ENCODE measurements at regions of chr1 and their contacts with region 1.

Region 1: GRCh38 chr1:184805667-184806295 is 51.1 kb upstream of the EDEM3 start:
- DNase-seq: peak; percentile 83 to 89
- H3K4me3 ChIP-seq: no peak overlapping the region
- H3K4me3 Mint-ChIP-seq: no peak overlapping the region
- H3K27ac Mint-ChIP-seq: no peak overlapping the region
- H3K4me1 ChIP-seq: no peaks in the 10 kb centered on the region
- H3K4me1 Mint-ChIP-seq: peaks cover 9% of the 10 kb centered on the region
- H3K27me3 ChIP-seq: no peaks in the 10 kb centered on the region
- H3K27me3 Mint-ChIP-seq: no peaks in the 10 kb centered on the region
- CTCF ChIP-seq: peak; percentile 88 to 94

Region 2: GRCh38 chr1:182861994-182862393 is 1943.8 kb before region 1 on chr1:
- CTCF ChIA-PET with region 1: no interaction called
- POLR2A ChIA-PET with region 1: interaction called, 10 read pairs
- intact Hi-C with region 1: no loop called
- DNase-seq: no peak
- H3K4me3 ChIP-seq: no peak overlapping the region
- H3K4me3 Mint-ChIP-seq: no peak overlapping the region
- H3K27ac Mint-ChIP-seq: no peak overlapping the region
- H3K4me1 ChIP-seq: no peaks in the 10 kb centered on the region
- H3K4me1 Mint-ChIP-seq: no peaks in the 10 kb centered on the region
- H3K27me3 ChIP-seq: no peaks in the 10 kb centered on the region
- H3K27me3 Mint-ChIP-seq: no peaks in the 10 kb centered on the region
- CTCF ChIP-seq: no peak

Region 3: DNA sequence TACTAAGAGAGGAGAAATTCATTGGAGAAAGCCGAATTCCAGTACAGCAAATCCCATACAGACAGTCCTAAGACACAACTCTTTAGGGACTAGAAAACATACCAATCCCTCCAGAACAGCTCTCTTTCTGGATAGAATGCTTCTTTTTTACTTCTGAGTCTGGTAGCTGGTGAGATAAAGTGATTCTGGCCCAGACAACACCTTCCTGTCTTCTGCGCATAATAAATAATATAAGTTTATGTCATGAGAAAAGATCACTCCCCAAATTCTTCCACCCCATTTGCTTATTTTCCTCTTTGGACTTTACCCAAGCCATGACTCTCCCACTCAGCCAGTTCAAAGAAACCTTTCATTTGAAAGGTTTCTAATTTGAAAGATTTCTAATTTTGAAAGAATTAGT is 149.6 kb before region 1 on chr1:
- CTCF ChIA-PET with region 1: no interaction called
- POLR2A ChIA-PET with region 1: no interaction called
- intact Hi-C with region 1: no loop called
- DNase-seq: no peak
- H3K4me3 ChIP-seq: no peak overlapping the region
- H3K4me3 Mint-ChIP-seq: no peak overlapping the region
- H3K27ac Mint-ChIP-seq: no peak overlapping the region
- H3K4me1 ChIP-seq: no peaks in the 10 kb centered on the region
- H3K4me1 Mint-ChIP-seq: no peaks in the 10 kb centered on the region
- H3K27me3 ChIP-seq: no peaks in the 10 kb centered on the region
- H3K27me3 Mint-ChIP-seq: peaks cover 3% of the 10 kb centered on the region
- CTCF ChIP-seq: no peak

Region 4: DNA sequence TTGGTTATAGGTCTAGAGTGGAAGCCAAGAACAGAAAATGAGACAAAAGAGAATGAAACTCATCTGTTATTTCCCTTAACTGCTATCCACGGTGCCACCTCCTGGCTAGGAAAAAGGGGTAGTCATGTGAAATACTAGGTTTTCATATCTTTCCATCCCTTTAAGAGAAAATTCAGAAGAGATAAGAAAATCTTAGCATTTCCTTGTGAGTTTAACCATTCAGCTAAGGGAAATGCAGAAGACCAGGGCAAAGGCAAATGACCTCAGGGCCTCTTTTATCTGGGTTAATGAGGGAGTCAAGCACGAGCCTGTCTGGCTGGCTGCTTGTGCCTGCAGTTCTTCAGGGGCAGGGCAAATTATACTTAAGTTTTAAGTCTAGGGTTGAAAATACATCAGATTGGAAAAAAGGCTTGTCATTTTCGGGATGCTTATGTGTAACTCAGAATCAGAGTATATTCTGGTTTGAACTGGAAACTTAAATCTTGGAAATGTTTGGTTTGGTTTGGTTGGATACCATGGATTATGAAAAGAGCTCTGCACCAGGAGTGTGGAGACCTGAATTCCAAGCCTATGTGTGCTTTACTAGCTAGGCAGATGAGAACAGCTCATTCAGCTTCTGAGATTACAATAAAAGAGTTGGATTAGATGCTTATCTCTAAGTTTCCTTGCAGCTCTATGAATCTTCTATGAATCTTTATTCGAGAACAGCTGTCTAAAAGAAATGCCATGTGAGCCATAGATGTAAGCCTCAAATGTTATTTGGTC is 148.6 kb after region 1 on chr1:
- CTCF ChIA-PET with region 1: interaction called, 7 read pairs
- POLR2A ChIA-PET with region 1: no interaction called
- intact Hi-C with region 1: loop called (anchors 1 kb)
- DNase-seq: peak; percentile 9 to 40
- H3K4me3 ChIP-seq: no peak overlapping the region
- H3K4me3 Mint-ChIP-seq: no peak overlapping the region
- H3K27ac Mint-ChIP-seq: no peak overlapping the region
- H3K4me1 ChIP-seq: peaks cover 16% of the 10 kb centered on the region
- H3K4me1 Mint-ChIP-seq: peaks cover 18% of the 10 kb centered on the region
- H3K27me3 ChIP-seq: no peaks in the 10 kb centered on the region
- H3K27me3 Mint-ChIP-seq: peaks cover 2% of the 10 kb centered on the region
- CTCF ChIP-seq: no peak

Region 5: GRCh38 chr1:184982002-184982954 is 176.5 kb after region 1 on chr1:
- CTCF ChIA-PET with region 1: interaction called, 28 read pairs
- POLR2A ChIA-PET with region 1: no interaction called
- intact Hi-C with region 1: loop called (anchors 1 kb)
- DNase-seq: peak; percentile 62 to 78
- H3K4me3 ChIP-seq: no peak overlapping the region
- H3K4me3 Mint-ChIP-seq: no peak overlapping the region
- H3K27ac Mint-ChIP-seq: no peak overlapping the region
- H3K4me1 ChIP-seq: no peaks in the 10 kb centered on the region
- H3K4me1 Mint-ChIP-seq: no peaks in the 10 kb centered on the region
- H3K27me3 ChIP-seq: peaks cover 2% of the 10 kb centered on the region; the same call in 1 of the 2 replicates
- H3K27me3 Mint-ChIP-seq: peaks cover 9% of the 10 kb centered on the region
- CTCF ChIP-seq: peak; percentile 77 to 89

Region 6: DNA sequence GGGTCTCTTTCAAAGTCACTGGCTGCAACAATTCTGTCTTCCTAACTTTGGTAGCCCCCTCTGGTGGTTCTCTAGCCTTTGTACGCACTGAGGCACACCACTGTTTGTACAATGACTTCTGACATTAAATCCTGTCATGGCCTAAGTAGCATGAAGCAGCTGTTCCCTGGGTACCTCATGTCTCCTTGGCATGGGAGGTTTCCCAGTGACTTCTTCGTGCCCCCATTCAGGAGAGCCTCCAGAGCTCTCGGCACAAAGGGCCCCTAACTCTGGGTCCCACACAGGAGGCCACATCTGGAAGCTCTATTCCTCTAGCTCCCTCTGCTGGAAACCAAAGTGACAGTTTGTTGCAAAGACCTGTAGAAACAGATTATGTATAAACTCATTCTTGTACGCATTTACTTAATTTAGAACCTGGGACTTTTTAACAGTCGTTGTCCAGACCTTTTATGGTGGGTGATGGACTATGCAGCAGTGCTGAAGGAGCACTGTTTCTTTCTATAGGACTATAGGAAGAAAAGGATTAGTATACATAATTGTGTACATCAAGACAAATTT is 364.6 kb after region 1 on chr1:
- CTCF ChIA-PET with region 1: interaction called, 15 read pairs
- POLR2A ChIA-PET with region 1: no interaction called
- intact Hi-C with region 1: loop called (anchors 1 kb)
- DNase-seq: peak; percentile 55 to 71
- H3K4me3 ChIP-seq: no peak overlapping the region
- H3K4me3 Mint-ChIP-seq: peak overlapping the region; percentile 49
- H3K27ac Mint-ChIP-seq: no peak overlapping the region
- H3K4me1 ChIP-seq: no peaks in the 10 kb centered on the region
- H3K4me1 Mint-ChIP-seq: peaks cover 15% of the 10 kb centered on the region
- H3K27me3 ChIP-seq: no peaks in the 10 kb centered on the region
- H3K27me3 Mint-ChIP-seq: no peaks in the 10 kb centered on the region
- CTCF ChIP-seq: peak; percentile 75 to 79